Activated naive CD4-positive, alpha-beta T cell treated with anti-CD3 and anti-CD28 coated beads for 36 hours (primary cell): ENCODE measurements at regions of chr1 and their contacts with region 1.

Region 1: GRCh38 chr1:228082135-228082891 is at the start of gene ARF1:
- DNase-seq: peak; percentile 89
- H3K4me3 Mint-ChIP-seq: peak within 1 kb of the TSS; percentile 93
- H3K27ac Mint-ChIP-seq: peak within 1 kb of the TSS; percentile 96
- H3K4me1 Mint-ChIP-seq: peaks cover 50% of the 10 kb centered on the region
- H3K27me3 Mint-ChIP-seq: no peaks in the 10 kb centered on the region
- total RNA-seq, gene ARF1: 346 to 358 TPM

Region 2: GRCh38 chr1:228004331-228004855 is 77.9 kb before region 1 on chr1:
- CTCF ChIA-PET with region 1: interaction called, 6 read pairs
- intact Hi-C with region 1: loop called (anchors 5 kb)
- DNase-seq: no peak
- H3K4me3 Mint-ChIP-seq: no peak overlapping the region
- H3K27ac Mint-ChIP-seq: no peak overlapping the region
- H3K4me1 Mint-ChIP-seq: peaks cover 17% of the 10 kb centered on the region
- H3K27me3 Mint-ChIP-seq: peaks cover 56% of the 10 kb centered on the region

Region 3: DNA sequence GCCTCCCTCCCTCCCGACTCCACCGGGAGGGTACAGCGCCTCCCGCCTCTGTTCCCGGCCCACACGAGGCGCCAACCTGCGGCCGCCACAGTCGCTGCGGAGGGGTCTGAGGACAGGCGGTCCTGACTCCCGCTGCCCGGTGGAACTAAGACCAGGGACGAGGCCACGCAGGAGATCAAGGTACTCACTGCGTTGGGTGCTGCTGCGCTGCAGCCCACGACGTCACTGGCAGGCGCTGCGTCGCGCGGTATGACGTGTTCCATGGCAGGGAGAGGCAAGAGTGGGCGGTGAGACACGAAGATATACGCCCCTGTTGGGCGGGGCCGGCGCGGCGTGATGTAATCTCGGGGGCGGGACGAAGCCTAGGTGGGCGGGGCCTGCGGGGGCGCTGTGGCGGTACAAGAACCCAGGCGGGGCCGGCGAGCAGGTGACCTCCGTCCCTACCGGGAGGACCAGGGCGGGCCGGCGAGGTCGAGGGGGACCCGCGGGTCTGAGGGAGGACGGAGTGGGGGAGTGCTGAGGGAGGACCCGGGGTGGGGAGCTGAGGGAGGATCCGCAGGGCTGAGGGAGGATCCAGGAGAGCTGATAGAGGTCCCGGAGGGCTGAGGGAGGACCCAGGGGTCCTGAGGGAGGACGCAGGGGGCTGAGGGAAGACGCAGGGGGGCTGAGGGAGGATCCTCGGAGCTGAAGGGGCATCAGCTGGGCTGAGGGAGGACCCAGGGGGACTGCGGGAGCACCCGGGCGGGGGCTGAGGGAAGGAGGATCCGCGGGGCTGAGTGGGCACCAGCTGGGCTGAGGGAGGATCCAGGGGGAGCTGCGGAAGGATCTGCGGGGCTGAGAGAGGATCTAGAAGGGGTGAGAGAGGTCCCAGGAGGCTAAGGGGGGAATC is 27.0 kb after region 1 on chr1 and contains the start of gene MRPL55:
- CTCF ChIA-PET with region 1: interaction called, 3 read pairs
- intact Hi-C with region 1: loop called (anchors 1 kb)
- DNase-seq: peak; percentile 98
- H3K4me3 Mint-ChIP-seq: peak within 1 kb of the TSS; percentile 91
- H3K27ac Mint-ChIP-seq: peak within 1 kb of the TSS; percentile 85
- H3K4me1 Mint-ChIP-seq: peaks cover 27% of the 10 kb centered on the region
- H3K27me3 Mint-ChIP-seq: no peaks in the 10 kb centered on the region
- total RNA-seq, gene MRPL55: 45.5 TPM